ENCODE measurements at regions of chr18 and their contacts with region 1.

Region 1: DNA sequence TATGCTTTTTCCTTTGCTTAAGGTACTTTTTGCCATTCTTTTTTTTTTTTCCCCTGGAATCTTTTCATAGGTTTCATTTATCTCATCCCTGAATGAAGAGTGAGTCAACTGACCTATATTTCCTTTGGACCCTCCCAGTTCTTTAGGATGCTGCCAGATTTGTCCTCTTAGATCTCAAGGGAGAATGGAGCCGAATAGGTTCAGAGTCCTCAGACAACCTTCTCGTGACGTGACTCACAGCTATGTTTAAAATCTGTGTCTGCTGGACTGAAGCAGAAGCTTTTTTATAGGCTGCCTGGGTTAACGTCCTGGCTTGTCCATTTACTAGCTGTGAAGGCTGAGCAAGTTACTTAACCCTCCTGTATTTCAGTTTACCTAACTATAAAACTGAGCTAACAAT is 358.6 kb downstream of the DLGAP1 start:
- DNase-seq: no peak
- H3K4me3 ChIP-seq: no peak overlapping the region
- H3K27ac ChIP-seq: no peak overlapping the region
- H3K4me1 ChIP-seq: no peaks in the 10 kb centered on the region
- H3K27me3 ChIP-seq: peaks cover 14% of the 10 kb centered on the region; the same call in 1 of the 2 replicates
- CTCF ChIP-seq: no peak

Region 2: DNA sequence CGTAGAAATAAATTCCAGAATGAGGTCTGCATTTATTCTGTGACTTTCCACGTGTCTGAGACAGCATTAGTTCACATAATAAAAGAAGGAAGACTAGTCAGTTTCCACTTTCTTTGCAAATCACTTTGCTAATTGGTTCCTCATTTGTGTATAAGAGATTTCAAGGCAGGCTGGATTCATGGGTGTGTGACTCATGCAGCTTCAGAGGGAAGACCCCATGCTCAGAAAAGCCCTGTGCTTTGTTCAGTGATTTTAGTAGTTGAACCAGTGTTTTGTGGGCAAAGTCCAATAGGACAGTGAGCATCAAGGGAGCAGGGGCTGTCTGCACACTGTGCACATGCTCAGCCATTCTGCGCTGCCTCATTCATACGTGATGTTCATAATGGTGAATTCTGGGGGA is 60.9 kb after region 1 on chr18:
- CTCF ChIA-PET with region 1: no interaction called
- POLR2A ChIA-PET with region 1: no interaction called
- intact Hi-C with region 1: loop called (anchors 10 kb)
- DNase-seq: no peak
- H3K4me3 ChIP-seq: no peak overlapping the region
- H3K27ac ChIP-seq: no peak overlapping the region
- H3K4me1 ChIP-seq: no peaks in the 10 kb centered on the region
- H3K27me3 ChIP-seq: peaks cover 36% of the 10 kb centered on the region
- CTCF ChIP-seq: no peak

Region 3: DNA sequence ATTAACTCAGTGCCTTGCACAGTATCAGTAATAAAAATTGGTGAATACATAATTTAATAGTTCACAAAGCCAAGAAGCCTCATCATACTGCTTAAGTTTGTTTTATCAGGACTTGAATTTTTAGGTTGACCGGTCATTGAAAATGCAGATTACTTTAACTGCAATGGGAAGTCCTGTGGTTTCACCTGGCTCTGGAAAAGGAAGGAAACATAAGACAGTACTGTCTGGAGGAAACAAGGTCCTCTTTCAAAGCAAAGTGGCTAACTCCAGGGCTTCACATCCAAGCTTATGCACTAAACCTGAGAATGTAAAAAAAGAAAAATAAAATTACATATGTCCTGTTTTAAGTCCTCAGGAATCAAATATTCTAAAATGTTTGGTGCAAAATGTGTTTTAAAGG is 238.9 kb after region 1 on chr18:
- CTCF ChIA-PET with region 1: no interaction called
- POLR2A ChIA-PET with region 1: no interaction called
- intact Hi-C with region 1: no loop called
- DNase-seq: no peak
- H3K4me3 ChIP-seq: no peak overlapping the region
- H3K27ac ChIP-seq: no peak overlapping the region
- H3K4me1 ChIP-seq: no peaks in the 10 kb centered on the region
- H3K27me3 ChIP-seq: peaks cover 11% of the 10 kb centered on the region; the same call in 1 of the 2 replicates
- CTCF ChIP-seq: no peak